ENCODE measurements at regions of chr1 and their contacts with region 1.

Region 1: DNA sequence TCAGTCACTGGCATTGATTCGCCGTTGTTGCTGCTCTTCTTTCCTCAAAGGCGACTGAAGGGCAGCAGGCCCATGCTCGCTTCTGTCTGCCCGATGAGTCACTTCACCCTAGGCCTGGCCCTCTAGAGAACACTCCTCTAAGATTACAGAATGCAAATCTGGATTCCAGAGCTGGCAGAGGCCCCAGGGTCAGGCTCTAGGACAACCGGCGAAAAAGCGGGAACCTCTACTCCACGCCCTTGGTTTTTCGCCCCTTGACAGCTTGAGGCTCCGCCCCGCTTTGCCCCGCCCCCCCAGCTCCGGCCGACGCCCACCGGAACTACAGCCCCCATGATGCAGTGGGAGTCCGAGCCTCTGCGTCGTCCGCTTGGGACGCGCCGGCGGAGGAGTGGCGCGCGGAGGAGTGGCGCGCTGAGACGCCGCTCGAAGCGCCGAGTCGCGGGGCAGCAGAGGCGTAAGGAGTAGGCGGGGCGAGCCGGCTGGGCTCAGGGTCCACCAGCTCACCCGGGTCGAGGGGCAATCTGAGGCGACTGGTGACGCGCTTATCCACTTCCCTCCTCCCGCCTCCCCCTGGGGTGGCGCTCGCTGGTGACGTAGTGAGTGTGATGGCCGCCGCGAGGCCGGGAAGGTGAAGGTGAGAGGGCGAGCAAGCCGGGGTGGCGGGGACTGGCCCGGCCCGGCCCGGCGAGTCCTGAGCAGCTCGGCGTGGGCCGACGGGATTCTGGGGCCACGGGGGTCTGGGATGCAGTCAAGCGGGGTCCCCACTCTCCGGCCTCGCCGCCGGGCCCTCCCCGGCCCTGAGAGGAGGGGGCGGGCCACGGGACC is at the start of gene MFN2:
- DNase-seq: peak; percentile 81 to 96 (median 88)
- ATAC-seq: peak; percentile 92
- H3K4me3 ChIP-seq: peak within 1 kb of the TSS; percentile 90
- H3K4me3 Mint-ChIP-seq: peak within 1 kb of the TSS; percentile 96
- H3K27ac ChIP-seq: peak within 1 kb of the TSS; percentile 90 to 97
- H3K27ac Mint-ChIP-seq: peak within 1 kb of the TSS; percentile 93
- H3K4me1 ChIP-seq: peaks cover 25% of the 10 kb centered on the region
- H3K4me1 Mint-ChIP-seq: peaks cover 45% of the 10 kb centered on the region
- H3K27me3 ChIP-seq: no peaks in the 10 kb centered on the region
- H3K27me3 Mint-ChIP-seq: no peaks in the 10 kb centered on the region
- CTCF ChIP-seq: no peak
- total RNA-seq, gene MFN2: 33.0 to 38.1 TPM

Region 2: DNA sequence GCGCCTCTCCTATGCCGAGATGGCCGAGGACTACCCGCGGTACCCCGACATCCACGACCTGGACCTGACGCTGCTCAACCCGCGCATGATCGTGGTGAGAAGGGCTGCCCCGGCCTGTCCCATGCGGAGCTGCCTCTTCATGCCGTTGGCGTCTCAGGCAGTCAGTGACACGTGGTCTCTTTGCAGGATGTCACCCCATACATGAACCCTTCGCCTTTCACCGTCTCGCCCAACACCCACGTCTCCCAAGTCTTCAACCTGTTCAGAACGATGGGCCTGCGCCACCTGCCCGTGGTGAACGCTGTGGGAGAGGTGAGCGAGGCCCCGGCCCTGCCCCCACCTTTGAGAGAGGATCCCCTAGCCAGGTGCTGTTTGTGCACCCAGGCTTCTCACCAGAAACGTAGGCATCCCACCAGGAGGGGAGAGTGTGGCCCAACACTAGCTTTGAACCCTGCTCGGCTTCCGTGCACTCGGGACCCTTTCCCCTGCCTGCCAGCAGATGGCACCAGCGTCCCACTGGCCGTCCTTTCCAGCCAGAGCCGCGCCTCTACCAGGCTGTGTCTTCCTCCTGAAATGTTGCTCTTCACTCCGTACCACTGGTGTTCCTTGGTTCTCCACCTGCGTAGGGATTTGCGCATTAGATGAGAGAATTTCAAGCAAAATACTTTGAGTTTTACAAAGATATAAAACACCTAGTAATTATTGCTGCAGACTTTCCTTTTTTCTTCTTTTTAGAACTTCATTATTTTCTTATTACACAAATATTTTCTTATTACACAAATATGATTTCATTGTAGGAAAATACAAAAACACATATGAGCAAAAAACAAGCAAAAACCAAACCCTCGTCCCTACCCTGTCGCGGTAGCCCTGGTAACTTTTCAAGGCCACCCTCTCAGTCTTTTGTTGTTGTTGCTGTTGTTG is 141.5 kb before region 1 on chr1:
- CTCF ChIA-PET with region 1: no interaction called
- POLR2A ChIA-PET with region 1: no interaction called
- intact Hi-C with region 1: loop called in 1 of 2 experiments (anchors 5 kb)
- DNase-seq: peak; percentile 55 to 84 (median 70)
- ATAC-seq: peak; percentile 98
- H3K4me3 ChIP-seq: no peak overlapping the region
- H3K4me3 Mint-ChIP-seq: no peak overlapping the region
- H3K27ac ChIP-seq: no peak overlapping the region
- H3K27ac Mint-ChIP-seq: no peak overlapping the region
- H3K4me1 ChIP-seq: peaks cover 4% of the 10 kb centered on the region
- H3K4me1 Mint-ChIP-seq: peaks cover 5% of the 10 kb centered on the region
- H3K27me3 ChIP-seq: no peaks in the 10 kb centered on the region
- H3K27me3 Mint-ChIP-seq: no peaks in the 10 kb centered on the region
- CTCF ChIP-seq: peak; percentile 99

Region 3: DNA sequence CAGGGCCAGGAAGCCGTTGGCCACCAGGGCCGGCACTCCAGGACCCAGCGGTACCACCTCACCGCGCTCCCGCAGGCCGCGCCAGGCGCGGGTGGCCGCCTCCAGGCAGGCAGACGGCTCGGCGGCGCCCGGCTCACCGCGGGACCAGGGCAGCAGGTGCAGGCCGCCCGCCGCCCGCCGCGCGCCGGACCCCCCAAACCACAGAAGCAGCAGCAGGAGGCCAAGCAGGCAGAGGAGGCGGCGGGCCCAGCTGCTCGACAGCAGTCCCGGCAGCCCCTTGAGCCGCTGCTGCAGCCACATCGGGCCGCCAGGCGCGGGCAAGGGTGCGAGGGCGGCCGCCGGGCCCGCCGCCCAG is 54.1 kb before region 1 on chr1:
- CTCF ChIA-PET with region 1: no interaction called
- POLR2A ChIA-PET with region 1: no interaction called
- intact Hi-C with region 1: loop called in 1 of 2 experiments (anchors 2 kb)
- DNase-seq: peak in 2 of 14 experiments; percentile 12
- ATAC-seq: peak; percentile 18
- H3K4me3 ChIP-seq: peak overlapping the region; percentile 48
- H3K4me3 Mint-ChIP-seq: no peak overlapping the region
- H3K27ac ChIP-seq: no peak overlapping the region
- H3K27ac Mint-ChIP-seq: peak overlapping the region; percentile 61
- H3K4me1 ChIP-seq: peaks cover 43% of the 10 kb centered on the region
- H3K4me1 Mint-ChIP-seq: peaks cover 29% of the 10 kb centered on the region
- H3K27me3 ChIP-seq: no peaks in the 10 kb centered on the region
- H3K27me3 Mint-ChIP-seq: no peaks in the 10 kb centered on the region
- CTCF ChIP-seq: no peak

Region 4: DNA sequence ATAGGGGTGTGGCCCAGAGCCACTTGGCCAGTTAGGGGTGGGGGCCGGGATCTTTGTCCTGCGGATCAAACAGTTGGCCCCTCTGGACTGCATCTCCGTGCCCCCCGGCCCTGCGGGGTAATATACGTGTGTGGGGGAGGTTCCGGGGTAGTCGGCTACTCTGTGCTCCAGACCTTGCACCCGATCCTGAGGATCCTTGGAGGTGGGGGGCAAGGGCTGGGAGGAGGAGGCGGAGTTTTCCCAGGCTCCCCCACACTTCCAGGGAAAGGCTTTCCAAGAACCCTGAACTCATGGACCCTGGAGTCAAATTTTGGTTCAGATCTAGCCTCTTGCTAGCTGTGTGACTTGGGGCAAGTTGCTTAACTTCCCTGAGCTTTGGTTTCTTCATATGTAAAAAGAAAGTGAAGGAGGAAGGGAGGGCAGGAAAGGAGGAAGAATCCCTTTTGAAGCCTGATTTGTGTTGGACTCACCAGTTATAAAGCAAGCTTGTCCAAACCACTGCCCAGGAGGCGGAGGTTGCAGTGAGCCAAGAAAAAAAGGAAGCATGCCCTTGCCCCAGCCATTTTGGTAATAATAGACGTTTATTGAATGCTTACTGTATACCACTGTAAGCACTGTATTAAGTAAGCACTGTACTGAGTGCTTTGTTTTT is 39.9 kb after region 1 on chr1:
- CTCF ChIA-PET with region 1: no interaction called
- POLR2A ChIA-PET with region 1: interaction called, 8 read pairs
- intact Hi-C with region 1: loop called (anchors 1 kb)
- DNase-seq: peak in 2 of 14 experiments; percentile 36 to 40
- ATAC-seq: no peak
- H3K4me3 ChIP-seq: peak overlapping the region; percentile 81
- H3K4me3 Mint-ChIP-seq: peak overlapping the region; percentile 87
- H3K27ac ChIP-seq: peak overlapping the region in 1 of 2 donors; percentile 17
- H3K27ac Mint-ChIP-seq: peak overlapping the region; percentile 77
- H3K4me1 ChIP-seq: peaks cover 19% of the 10 kb centered on the region
- H3K4me1 Mint-ChIP-seq: peaks cover 12% of the 10 kb centered on the region
- H3K27me3 ChIP-seq: no peaks in the 10 kb centered on the region
- H3K27me3 Mint-ChIP-seq: no peaks in the 10 kb centered on the region
- CTCF ChIP-seq: no peak